Activated T-helper 1 cell treated with anti-CD3 and anti-CD28 coated beads, Interleukin-12 subunit alpha, Interleukin-12 subunit beta, Interleukin-2, Interleukin-4 antibody, amounts not matched to agents 30 ng/mL and 10 ng/mL and 1 ng/mL, durations not matched to agents 14 hours and 24 hours and 36 hours (primary cell): ENCODE measurements at regions of chr13 and their contacts with region 1.

Region 1: DNA sequence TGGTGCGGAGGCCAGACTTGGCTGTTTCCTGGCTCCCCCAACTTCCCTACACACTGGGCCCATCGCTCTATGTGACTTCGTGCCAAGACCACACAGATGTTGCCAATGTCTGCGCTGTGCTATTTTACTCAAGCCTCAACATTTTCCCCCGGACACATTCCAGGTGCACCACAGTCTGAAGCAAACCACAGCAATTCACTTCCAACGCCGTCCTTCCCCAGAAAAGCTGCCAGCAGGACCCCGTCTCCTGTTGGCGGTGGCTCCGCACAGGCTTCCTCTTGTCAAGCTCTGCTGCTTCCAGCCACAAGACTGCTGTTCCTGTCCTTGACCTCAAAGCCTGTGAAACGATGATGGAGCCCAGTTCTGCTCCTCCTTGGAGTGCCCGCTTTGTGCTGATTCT is 100.7 kb downstream of the CRYL1 start:
- DNase-seq: no peak
- H3K4me3 Mint-ChIP-seq: no peak overlapping the region
- H3K27ac Mint-ChIP-seq: no peak overlapping the region
- H3K4me1 Mint-ChIP-seq: peaks cover 65% of the 10 kb centered on the region
- H3K27me3 Mint-ChIP-seq: peaks cover 2% of the 10 kb centered on the region

Region 2: DNA sequence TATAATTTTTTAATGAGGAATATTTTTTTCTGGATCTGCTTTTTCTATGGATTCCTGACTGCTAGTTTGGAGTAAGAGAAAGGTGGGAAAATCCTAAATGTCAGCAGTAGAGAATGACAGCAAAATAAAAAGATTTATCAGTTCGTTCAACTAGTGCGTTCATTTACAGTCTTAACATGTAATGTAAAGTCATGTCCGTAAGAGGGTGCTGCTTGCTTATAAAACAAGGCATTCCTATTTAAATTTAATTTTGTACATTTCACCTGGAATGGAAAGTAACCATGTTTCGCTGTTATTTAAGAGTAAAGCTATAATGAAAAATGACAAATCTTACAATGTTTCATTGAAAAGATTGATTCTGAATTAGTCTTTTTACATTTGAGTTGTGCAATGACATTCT is 389.8 kb before region 1 on chr13:
- intact Hi-C with region 1: no loop called
- DNase-seq: no peak
- H3K4me3 Mint-ChIP-seq: no peak overlapping the region
- H3K27ac Mint-ChIP-seq: no peak overlapping the region
- H3K4me1 Mint-ChIP-seq: peaks cover 6% of the 10 kb centered on the region
- H3K27me3 Mint-ChIP-seq: no peaks in the 10 kb centered on the region

Region 3: GRCh38 chr13:20353973-20354372 is 71.0 kb before region 1 on chr13:
- intact Hi-C with region 1: no loop called
- DNase-seq: no peak
- H3K4me3 Mint-ChIP-seq: no peak overlapping the region
- H3K27ac Mint-ChIP-seq: no peak overlapping the region
- H3K4me1 Mint-ChIP-seq: peaks cover 5% of the 10 kb centered on the region
- H3K27me3 Mint-ChIP-seq: no peaks in the 10 kb centered on the region

Region 4: DNA sequence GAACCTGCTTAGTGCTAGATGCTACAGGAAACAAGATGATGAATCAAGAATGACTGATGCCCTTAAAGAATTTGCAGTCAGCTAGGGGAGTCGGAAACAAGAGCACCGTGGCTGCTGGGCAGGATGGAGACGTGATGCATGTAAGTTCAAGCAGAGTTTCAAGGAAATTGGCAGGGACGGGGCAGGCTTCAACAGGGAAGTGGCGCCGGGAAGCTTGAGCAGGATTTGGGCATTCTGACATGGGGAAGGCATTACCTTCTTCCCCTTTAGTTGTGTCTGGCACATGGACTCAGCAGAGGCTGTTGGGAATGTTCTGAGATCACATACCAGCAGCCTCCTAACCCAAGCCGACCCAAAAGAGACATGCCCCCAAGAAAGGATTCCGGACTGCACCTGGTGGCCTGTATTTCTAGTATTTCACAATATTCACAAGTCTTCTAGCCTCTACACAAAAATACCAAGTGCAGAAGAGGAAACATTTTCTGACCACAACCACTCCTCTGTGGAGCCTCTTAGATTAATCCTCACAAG is 37.4 kb before region 1 on chr13:
- intact Hi-C with region 1: no loop called
- DNase-seq: no peak
- H3K4me3 Mint-ChIP-seq: no peak overlapping the region
- H3K27ac Mint-ChIP-seq: peak overlapping the region; percentile 24
- H3K4me1 Mint-ChIP-seq: peaks cover 19% of the 10 kb centered on the region
- H3K27me3 Mint-ChIP-seq: peaks cover 8% of the 10 kb centered on the region

Region 5: DNA sequence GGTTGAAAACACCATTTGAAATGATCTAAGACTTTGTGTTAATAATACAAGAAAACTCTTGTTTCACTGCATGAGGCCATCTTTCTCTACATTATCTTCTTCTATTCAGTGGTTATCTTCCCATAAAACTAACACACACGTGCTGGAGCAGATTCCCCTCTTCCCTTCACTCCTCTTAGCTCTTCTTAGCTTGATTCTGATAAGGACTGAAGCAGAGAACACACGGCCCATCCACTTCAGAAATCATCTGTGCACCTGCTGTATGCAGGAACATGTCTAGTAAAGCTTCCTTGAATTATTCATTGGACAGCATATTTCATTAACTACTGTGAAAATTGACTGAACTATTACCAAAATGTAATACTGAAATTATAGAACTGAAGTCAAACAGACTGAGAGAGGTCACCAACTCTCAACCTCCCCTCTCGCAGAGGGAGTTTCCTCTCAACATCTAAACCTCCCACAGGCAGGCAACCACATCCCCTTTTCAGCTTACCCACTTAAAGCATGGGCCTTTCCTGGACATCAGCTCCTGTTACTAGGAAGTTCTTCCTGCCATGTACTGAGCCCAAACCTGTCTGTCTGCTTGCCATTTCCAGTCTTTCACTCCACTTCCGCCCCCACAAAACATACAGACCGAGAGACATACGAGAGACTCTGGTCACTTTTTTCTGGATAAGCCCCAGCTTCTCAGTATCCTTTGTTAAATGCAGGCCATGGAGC is 13.2 kb before region 1 on chr13:
- intact Hi-C with region 1: loop called (anchors 1 kb)
- DNase-seq: peak; percentile 46
- H3K4me3 Mint-ChIP-seq: peak overlapping the region; percentile 61
- H3K27ac Mint-ChIP-seq: peak overlapping the region; percentile 90
- H3K4me1 Mint-ChIP-seq: peaks cover 33% of the 10 kb centered on the region
- H3K27me3 Mint-ChIP-seq: peaks cover 4% of the 10 kb centered on the region

Region 6: DNA sequence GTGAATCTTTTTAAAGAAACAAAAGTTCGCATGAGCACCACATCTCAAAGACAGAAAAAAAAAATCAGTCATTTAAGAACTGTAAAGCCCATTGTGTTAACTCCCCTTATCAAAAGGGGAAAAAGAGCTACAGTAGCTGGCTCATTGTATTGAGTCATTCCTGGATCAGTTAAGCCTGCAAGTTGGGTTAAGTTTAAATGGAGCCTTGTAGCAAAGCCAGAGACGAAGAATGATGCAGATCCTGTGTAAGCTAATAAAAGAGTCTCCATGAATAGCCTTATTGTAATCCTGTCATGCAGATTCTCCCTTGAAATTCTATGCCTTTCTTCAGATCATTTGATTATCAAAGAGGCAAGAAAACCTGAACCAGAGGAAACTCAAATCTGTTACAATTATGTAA is 16.9 kb after region 1 on chr13:
- intact Hi-C with region 1: loop called (anchors 2 kb)
- DNase-seq: no peak
- H3K4me3 Mint-ChIP-seq: no peak overlapping the region
- H3K27ac Mint-ChIP-seq: no peak overlapping the region
- H3K4me1 Mint-ChIP-seq: no peaks in the 10 kb centered on the region
- H3K27me3 Mint-ChIP-seq: no peaks in the 10 kb centered on the region

Region 7: GRCh38 chr13:20566898-20567874 is 142.2 kb after region 1 on chr13 and contains the start of gene IFT88:
- intact Hi-C with region 1: loop called (anchors 2 kb)
- DNase-seq: peak; percentile 85
- H3K4me3 Mint-ChIP-seq: peak within 1 kb of the TSS; percentile 88
- H3K27ac Mint-ChIP-seq: peak within 1 kb of the TSS; percentile 88
- H3K4me1 Mint-ChIP-seq: peaks cover 27% of the 10 kb centered on the region
- H3K27me3 Mint-ChIP-seq: no peaks in the 10 kb centered on the region
- total RNA-seq, gene IFT88: 1.5 TPM in 2 replicates